ENCODE measurements at regions of chr15 and their contacts with region 1.

Region 1: GRCh38 chr15:52256366-52256765 is 39.2 kb downstream of the MYO5C start:
- DNase-seq: peak; percentile 80 to 86
- ATAC-seq: peak in 1 of 2 experiments; percentile 37; a peak in 4 of 6 replicates
- H3K4me3 ChIP-seq: no peak overlapping the region
- H3K27ac ChIP-seq: no peak overlapping the region; a peak in 1 of 6 replicates
- H3K4me1 ChIP-seq: peaks cover 50% of the 10 kb centered on the region
- CTCF ChIP-seq: peak; percentile 96
- EP300 ChIP-seq: no peak
- POLR2A ChIP-seq: no peak
- RAD21 ChIP-seq: peak; percentile 97 to 99

Region 2: DNA sequence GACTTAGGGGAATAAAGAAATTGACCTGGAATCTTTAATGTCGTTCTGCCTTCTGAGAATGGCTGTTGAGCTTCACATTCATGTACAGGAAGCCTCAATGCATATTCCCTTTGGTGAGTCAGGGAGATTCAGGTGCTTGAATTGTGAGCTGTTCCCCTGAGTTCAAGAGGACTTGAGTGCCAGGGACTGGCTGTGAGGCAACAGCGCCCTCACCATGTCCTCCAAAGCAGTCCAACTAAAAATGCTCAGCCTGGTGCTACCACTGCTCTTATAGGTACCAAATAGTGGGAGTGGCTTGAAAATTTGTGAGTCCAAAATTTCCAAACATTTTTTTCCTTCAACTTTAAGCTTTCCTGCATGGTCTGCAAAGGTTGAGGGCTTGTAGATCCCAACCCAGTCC is 338.9 kb before region 1 on chr15:
- CTCF ChIA-PET with region 1: no interaction called
- POLR2A ChIA-PET with region 1: no interaction called
- DNase-seq: peak; percentile 44 to 89
- ATAC-seq: peak; percentile 95 to 99
- H3K4me3 ChIP-seq: no peak overlapping the region
- H3K27ac ChIP-seq: no peak overlapping the region
- H3K4me1 ChIP-seq: peaks cover 4% of the 10 kb centered on the region; the same call in 1 of the 3 replicates
- CTCF ChIP-seq: peak; percentile 76
- EP300 ChIP-seq: no peak
- POLR2A ChIP-seq: no peak
- RAD21 ChIP-seq: peak; percentile 77 to 88

Region 3: DNA sequence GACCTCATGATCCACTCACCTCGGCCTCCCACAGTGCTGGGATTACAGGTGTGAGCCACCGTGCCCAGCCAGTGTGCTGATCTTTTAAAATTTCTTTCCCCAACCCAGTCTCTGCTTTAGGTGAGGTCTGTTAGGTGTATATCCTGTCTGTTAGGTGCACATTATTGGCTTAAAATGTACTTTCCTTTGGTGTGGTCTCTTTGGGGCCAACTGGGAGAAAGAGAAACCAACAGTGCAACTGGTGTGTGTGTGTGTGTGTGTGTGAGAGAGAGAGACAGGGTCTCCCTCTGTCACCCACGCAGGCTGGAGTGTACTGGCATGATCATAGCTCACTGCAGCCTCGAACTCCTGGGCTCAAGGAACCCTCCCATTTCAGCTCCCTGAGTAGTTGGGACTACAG is 14.9 kb before region 1 on chr15:
- CTCF ChIA-PET with region 1: interaction called, 18 read pairs
- POLR2A ChIA-PET with region 1: interaction called, 6 read pairs
- DNase-seq: no peak
- ATAC-seq: no peak
- H3K4me3 ChIP-seq: no peak overlapping the region
- H3K27ac ChIP-seq: no peak overlapping the region
- H3K4me1 ChIP-seq: no peaks in the 10 kb centered on the region
- CTCF ChIP-seq: no peak
- EP300 ChIP-seq: no peak
- POLR2A ChIP-seq: no peak
- RAD21 ChIP-seq: no peak

Region 4: DNA sequence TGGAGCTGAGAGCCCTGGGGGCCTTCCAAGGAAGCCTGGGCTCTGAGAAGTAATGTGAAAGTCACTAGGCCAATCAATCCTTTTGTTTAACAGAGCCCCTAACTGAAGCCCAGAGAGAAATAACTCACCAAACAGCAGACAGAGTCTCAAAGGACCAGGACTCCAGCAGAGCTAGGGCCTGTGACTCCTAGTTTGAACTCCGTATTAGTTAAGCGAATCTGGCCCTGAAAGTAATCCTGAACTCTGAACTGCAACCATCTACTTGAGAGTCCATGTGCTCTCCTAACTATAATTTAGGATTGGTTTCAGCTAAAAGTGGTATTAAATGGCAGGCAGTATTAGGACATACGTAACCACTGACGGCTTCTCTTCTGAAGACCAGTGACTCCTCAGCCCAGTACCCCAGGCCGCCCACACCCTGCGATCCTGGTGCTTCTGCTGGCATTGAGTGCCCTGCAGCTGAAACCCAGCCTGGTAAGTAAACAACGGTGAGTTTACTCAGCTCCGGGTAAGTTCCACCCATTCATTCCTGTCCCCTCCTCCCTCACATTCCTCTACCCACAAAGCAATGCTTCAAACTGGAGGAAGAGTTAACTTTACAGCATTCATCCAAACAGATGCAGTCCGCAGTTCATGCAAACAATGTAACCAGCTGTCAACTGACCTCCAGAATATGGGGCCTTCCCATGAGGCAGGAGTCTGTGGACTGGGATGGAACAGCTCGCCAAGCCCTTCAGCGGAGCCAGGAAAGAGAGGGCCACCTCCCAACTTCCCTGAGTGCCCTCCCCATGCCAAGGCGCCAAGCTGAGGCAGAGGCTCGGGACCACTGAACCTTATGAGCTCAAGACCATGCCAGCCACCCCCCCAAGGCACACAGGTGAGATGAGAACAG is 31.9 kb after region 1 on chr15:
- CTCF ChIA-PET with region 1: interaction called, 36 read pairs
- POLR2A ChIA-PET with region 1: interaction called, 6 read pairs
- DNase-seq: peak; percentile 97 to 99
- ATAC-seq: peak; percentile 94 to 97
- H3K4me3 ChIP-seq: peak overlapping the region; percentile 22
- H3K27ac ChIP-seq: peak overlapping the region; percentile 87 to 93
- H3K4me1 ChIP-seq: peaks cover 54% of the 10 kb centered on the region
- CTCF ChIP-seq: no peak
- EP300 ChIP-seq: peak in 1 of 2 experiments; percentile 63; a peak in 2 of 5 replicates
- POLR2A ChIP-seq: peak; percentile 63
- RAD21 ChIP-seq: peak; percentile 3 to 20; a peak in 1 of 5 replicates

Region 5: GRCh38 chr15:52303093-52303772 is 46.9 kb after region 1 on chr15:
- CTCF ChIA-PET with region 1: interaction called, 17 read pairs
- POLR2A ChIA-PET with region 1: no interaction called
- DNase-seq: no peak
- ATAC-seq: no peak
- H3K4me3 ChIP-seq: no peak overlapping the region
- H3K27ac ChIP-seq: no peak overlapping the region
- H3K4me1 ChIP-seq: peaks cover 13% of the 10 kb centered on the region
- CTCF ChIP-seq: no peak
- EP300 ChIP-seq: no peak
- POLR2A ChIP-seq: no peak
- RAD21 ChIP-seq: no peak

Region 6: DNA sequence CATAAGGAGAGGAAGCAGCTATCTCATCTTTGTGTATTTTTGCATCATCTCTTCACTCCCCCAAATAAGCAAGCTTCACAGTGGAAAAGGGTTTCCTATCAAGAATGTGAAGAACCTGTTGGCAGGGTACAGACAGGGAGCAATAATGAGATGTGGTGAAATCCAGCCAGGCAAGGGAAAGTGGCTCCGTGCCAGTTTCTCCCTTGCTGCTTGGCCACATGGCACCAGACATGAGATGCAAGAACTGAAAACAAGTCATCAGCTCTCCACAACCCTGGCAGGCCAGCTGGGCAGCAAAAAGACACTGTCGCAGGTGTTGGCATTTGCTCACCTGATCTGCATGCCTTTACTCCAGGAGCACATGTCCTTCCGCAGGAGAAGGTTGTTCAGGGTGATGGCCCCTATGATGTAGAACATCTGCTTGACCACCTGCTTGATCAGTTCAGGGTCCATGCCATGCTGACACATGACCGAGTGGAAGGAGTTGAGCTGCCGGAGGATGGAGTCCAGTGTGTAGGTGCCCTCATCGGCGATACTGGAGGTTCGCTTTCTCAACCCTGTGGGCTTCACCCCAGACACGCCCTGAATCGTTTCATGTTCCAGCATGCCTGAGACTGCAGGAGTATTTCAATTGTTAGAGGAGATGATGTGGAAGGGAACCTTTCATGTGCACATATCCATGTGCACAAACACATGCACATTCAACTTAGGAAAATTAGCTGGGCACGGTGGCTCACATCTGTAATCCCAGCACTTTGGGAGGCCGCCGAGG is 62.5 kb after region 1 on chr15:
- CTCF ChIA-PET with region 1: interaction called, 24 read pairs
- POLR2A ChIA-PET with region 1: no interaction called
- DNase-seq: no peak
- ATAC-seq: no peak
- H3K4me3 ChIP-seq: no peak overlapping the region
- H3K27ac ChIP-seq: no peak overlapping the region
- H3K4me1 ChIP-seq: no peaks in the 10 kb centered on the region
- CTCF ChIP-seq: no peak
- EP300 ChIP-seq: no peak
- POLR2A ChIP-seq: no peak
- RAD21 ChIP-seq: no peak

Region 7: GRCh38 chr15:52337198-52337853 is 81.0 kb after region 1 on chr15:
- CTCF ChIA-PET with region 1: interaction called, 30 read pairs
- POLR2A ChIA-PET with region 1: no interaction called
- DNase-seq: peak; percentile 50 to 59
- ATAC-seq: peak; percentile 67 to 68
- H3K4me3 ChIP-seq: no peak overlapping the region
- H3K27ac ChIP-seq: peak overlapping the region; percentile 55 to 80
- H3K4me1 ChIP-seq: peaks cover 69% of the 10 kb centered on the region
- CTCF ChIP-seq: no peak
- EP300 ChIP-seq: peak in 1 of 2 experiments; percentile 36; a peak in 1 of 5 replicates
- POLR2A ChIP-seq: no peak
- RAD21 ChIP-seq: no peak

Region 8: GRCh38 chr15:52960283-52960682 is 703.9 kb after region 1 on chr15:
- CTCF ChIA-PET with region 1: no interaction called
- POLR2A ChIA-PET with region 1: no interaction called
- DNase-seq: peak in 1 of 2 experiments; percentile 5
- ATAC-seq: peak; percentile 65 to 74; a peak in 4 of 6 replicates
- H3K4me3 ChIP-seq: no peak overlapping the region
- H3K27ac ChIP-seq: no peak overlapping the region
- H3K4me1 ChIP-seq: no peaks in the 10 kb centered on the region
- CTCF ChIP-seq: no peak
- EP300 ChIP-seq: no peak
- POLR2A ChIP-seq: no peak
- RAD21 ChIP-seq: no peak